ENCODE measurements at regions of chr9 and their contacts with region 1.

Region 1: GRCh38 chr9:32378993-32379729 is 5.3 kb upstream of the ACO1 start:
- DNase-seq: peak; percentile 46
- ATAC-seq: peak; percentile 87
- H3K4me3 Mint-ChIP-seq: peak overlapping the region; percentile 33
- H3K27ac Mint-ChIP-seq: no peak overlapping the region
- H3K4me1 Mint-ChIP-seq: peaks cover 14% of the 10 kb centered on the region
- H3K27me3 Mint-ChIP-seq: peaks cover 12% of the 10 kb centered on the region
- CTCF ChIP-seq: peak; percentile 68

Region 2: GRCh38 chr9:32398207-32398606 is 19.0 kb after region 1 on chr9:
- CTCF ChIA-PET with region 1: interaction called, 34 read pairs
- POLR2A ChIA-PET with region 1: no interaction called
- intact Hi-C with region 1: no loop called
- DNase-seq: no peak
- ATAC-seq: no peak
- H3K4me3 Mint-ChIP-seq: no peak overlapping the region
- H3K27ac Mint-ChIP-seq: no peak overlapping the region
- H3K4me1 Mint-ChIP-seq: no peaks in the 10 kb centered on the region
- H3K27me3 Mint-ChIP-seq: no peaks in the 10 kb centered on the region
- CTCF ChIP-seq: no peak

Region 3: GRCh38 chr9:32431940-32432555 is 52.9 kb after region 1 on chr9:
- CTCF ChIA-PET with region 1: interaction called, 111 read pairs
- POLR2A ChIA-PET with region 1: no interaction called
- intact Hi-C with region 1: loop called (anchors 2 kb)
- DNase-seq: peak; percentile 54
- ATAC-seq: peak; percentile 60
- H3K4me3 Mint-ChIP-seq: no peak overlapping the region
- H3K27ac Mint-ChIP-seq: no peak overlapping the region
- H3K4me1 Mint-ChIP-seq: peaks cover 2% of the 10 kb centered on the region
- H3K27me3 Mint-ChIP-seq: no peaks in the 10 kb centered on the region
- CTCF ChIP-seq: peak; percentile 33

Region 4: GRCh38 chr9:32526041-32526706 is 147.0 kb after region 1 on chr9 and contains the start of gene RIGI:
- CTCF ChIA-PET with region 1: interaction called, 44 read pairs
- POLR2A ChIA-PET with region 1: interaction called, 5 read pairs
- intact Hi-C with region 1: loop called (anchors 1 kb)
- DNase-seq: peak; percentile 81
- ATAC-seq: peak; percentile 75
- H3K4me3 Mint-ChIP-seq: peak within 1 kb of the TSS; percentile 85
- H3K27ac Mint-ChIP-seq: peak within 1 kb of the TSS; percentile 85
- H3K4me1 Mint-ChIP-seq: peaks cover 49% of the 10 kb centered on the region
- H3K27me3 Mint-ChIP-seq: no peaks in the 10 kb centered on the region
- CTCF ChIP-seq: peak; percentile 59
- total RNA-seq, gene RIGI: 5.4 to 5.6 TPM

Region 5: DNA sequence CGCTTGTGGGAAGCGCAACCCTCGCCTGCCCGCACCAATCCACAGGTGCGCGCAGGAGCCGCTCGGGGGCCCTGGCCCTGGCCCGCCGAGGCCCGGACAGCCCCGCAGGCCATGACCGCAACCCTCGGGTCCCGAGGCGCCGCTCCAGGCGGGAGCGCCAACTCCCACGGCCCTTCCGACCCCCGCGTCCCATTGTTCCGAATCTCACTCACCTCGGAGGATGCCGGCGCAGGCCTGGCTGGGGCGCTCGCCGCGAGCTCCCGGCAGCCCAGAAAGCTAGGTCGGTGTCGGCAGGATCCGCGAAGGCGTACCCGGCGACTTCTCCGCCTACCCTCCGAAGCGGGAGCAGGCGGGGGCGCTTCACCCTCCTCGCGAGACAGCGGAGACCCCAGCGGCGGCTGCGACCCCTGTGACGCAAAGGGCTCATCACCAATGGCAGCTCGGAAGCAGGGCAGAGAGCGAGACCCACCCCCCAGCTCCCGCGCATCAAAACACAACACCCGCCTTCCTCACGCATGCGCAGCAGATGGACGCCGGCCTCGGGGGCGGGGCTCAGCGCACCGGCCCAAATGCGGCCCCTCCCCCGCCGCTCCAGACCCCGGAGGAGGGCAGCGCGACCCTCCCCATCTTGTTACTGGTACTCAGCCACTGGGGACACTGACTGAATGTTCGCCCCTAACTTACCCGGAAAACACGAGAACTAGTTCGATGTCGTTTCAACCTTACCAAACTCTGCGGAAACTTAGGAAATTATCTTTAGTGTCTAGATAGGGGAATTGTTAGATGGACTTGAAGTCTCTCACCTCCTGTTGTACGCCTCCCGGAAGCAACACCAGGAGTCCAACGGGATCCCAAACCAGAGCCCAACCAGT is 171.6 kb after region 1 on chr9:
- CTCF ChIA-PET with region 1: interaction called, 26 read pairs
- POLR2A ChIA-PET with region 1: no interaction called
- intact Hi-C with region 1: no loop called
- DNase-seq: peak; percentile 95
- ATAC-seq: peak; percentile 72
- H3K4me3 Mint-ChIP-seq: peak overlapping the region; percentile 86
- H3K27ac Mint-ChIP-seq: peak overlapping the region; percentile 100
- H3K4me1 Mint-ChIP-seq: peaks cover 50% of the 10 kb centered on the region
- H3K27me3 Mint-ChIP-seq: no peaks in the 10 kb centered on the region
- CTCF ChIP-seq: no peak

Region 6: DNA sequence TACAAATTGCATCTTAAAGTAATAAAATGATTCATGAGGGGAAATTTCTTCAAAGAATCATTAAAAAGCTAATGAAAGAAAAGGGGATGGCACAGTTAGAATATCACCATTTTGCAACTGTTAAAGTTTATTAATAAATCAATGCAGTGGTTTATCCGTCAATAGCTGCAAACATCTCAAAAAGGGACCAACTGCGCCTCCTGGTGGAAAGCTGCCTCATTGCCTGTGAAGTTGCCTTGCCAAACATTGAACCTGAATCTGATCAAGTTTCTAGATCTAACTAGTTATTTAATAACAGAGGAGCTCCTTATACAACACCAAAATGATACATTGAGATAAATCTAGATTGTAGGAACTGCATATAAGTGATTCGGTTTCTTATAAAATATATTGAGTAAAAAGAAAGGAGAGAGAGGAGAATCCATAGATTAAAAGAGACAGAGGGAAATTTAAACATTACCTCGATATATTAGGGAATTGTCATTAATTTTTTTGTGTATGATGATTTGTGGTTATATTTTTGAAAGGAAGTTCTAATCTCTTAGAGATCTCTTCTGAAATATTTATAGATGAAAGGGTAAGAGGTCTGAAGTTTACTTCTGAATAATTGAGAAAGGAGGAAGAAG is 200.7 kb after region 1 on chr9:
- CTCF ChIA-PET with region 1: interaction called, 477 read pairs
- POLR2A ChIA-PET with region 1: interaction called, 10 read pairs
- intact Hi-C with region 1: loop called (anchors 1 kb)
- DNase-seq: peak; percentile 87
- ATAC-seq: peak; percentile 61
- H3K4me3 Mint-ChIP-seq: no peak overlapping the region
- H3K27ac Mint-ChIP-seq: no peak overlapping the region
- H3K4me1 Mint-ChIP-seq: no peaks in the 10 kb centered on the region
- H3K27me3 Mint-ChIP-seq: peaks cover 9% of the 10 kb centered on the region
- CTCF ChIP-seq: peak; percentile 94